ENCODE measurements at regions of chr4 and their contacts with region 1.

Region 1: DNA sequence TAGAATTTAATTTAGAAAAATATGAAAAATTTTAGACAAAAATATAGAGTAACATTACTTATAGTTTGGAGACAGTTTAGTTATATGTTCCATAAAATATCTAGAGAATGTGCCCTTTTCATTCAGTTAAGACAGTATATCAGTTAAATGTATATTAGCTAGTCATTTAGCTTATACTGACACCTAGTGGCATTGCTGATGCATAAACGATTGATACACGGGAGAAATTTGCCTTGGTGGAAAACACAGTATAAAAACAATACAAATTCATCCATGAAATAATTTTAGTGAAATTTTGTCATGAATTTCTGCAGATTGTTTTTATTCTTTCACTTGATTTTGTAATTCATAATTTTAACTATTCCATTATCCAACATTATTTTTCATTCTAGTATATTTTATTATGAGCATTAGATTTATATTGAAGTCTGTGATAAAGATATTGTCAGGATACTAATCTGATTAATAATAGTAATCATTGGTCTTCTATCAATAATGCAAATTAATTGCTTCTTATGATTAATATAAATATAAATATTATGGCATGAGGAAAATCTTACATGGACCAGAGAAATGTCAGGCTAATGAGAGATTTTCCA is 219.0 kb downstream of the TLL1 start:
- DNase-seq: no peak
- H3K4me3 Mint-ChIP-seq: no peak overlapping the region
- H3K27ac Mint-ChIP-seq: no peak overlapping the region
- H3K4me1 Mint-ChIP-seq: no peaks in the 10 kb centered on the region
- H3K27me3 Mint-ChIP-seq: no peaks in the 10 kb centered on the region

Region 2: GRCh38 chr4:165493359-165493758 is 598.7 kb before region 1 on chr4:
- intact Hi-C with region 1: loop called (anchors 1 kb)
- DNase-seq: peak; percentile 44
- H3K4me3 Mint-ChIP-seq: no peak overlapping the region
- H3K27ac Mint-ChIP-seq: no peak overlapping the region
- H3K4me1 Mint-ChIP-seq: peaks cover 3% of the 10 kb centered on the region
- H3K27me3 Mint-ChIP-seq: peaks cover 19% of the 10 kb centered on the region

Region 3: GRCh38 chr4:166078955-166079354 is 13.1 kb before region 1 on chr4:
- intact Hi-C with region 1: no loop called
- DNase-seq: no peak
- H3K4me3 Mint-ChIP-seq: no peak overlapping the region
- H3K27ac Mint-ChIP-seq: no peak overlapping the region
- H3K4me1 Mint-ChIP-seq: no peaks in the 10 kb centered on the region
- H3K27me3 Mint-ChIP-seq: no peaks in the 10 kb centered on the region

Region 4: DNA sequence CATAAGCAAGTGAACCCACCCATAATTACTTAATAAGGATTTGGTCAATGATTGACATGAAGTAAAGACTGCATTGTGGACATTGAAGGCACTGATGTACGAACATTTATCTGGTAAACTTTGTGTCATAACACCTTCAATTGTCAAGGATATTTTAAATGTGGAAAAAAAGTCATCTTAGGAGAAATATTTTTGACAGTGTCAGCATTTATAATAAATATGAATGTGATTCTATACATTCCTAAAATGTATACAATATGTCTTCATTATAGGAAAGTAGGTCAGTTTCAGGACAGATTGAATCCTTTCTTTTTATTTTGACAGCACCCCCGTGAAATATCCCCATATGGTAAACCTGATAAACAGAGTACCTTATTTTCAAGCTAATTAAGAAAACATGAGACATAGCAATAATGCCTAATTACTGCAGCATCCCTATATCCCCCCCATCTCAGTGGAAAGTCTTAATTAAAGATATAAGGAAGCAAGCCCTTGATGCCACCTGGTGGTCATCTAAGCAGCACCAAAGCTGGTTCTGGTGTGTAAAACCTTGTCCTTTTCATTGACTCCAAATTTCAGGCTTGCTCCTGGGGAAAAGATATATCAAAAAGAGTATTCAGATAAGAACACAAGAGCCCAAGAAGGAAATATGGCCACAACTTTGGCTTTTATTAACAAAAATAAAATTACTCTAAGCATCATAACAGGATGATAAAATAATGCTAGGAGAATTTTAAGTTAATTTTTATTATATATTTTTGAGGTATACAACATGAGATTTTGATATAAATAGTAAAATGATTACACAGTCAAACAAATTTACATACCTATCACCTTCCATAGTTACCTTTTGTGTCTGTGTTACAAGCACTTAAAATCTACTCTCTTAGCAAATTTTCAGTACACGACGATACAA is 160.7 kb after region 1 on chr4:
- intact Hi-C with region 1: no loop called
- DNase-seq: no peak
- H3K4me3 Mint-ChIP-seq: no peak overlapping the region
- H3K27ac Mint-ChIP-seq: no peak overlapping the region
- H3K4me1 Mint-ChIP-seq: no peaks in the 10 kb centered on the region
- H3K27me3 Mint-ChIP-seq: no peaks in the 10 kb centered on the region